Right ventricle myocardium inferior (tissue), 1 donor: ENCODE measurements at regions of chr5 and their contacts with region 1.

Region 1: GRCh38 chr5:179060116-179061008 is at the start of gene ZNF354C:
- DNase-seq: peak; percentile 96
- ATAC-seq: peak; percentile 99
- total RNA-seq, gene ZNF354C: 4.7 TPM

Region 2: GRCh38 chr5:178732281-178732680 is 328.1 kb before region 1 on chr5:
- intact Hi-C with region 1: loop called (anchors 1 kb)
- DNase-seq: no peak
- ATAC-seq: no peak

Region 3: GRCh38 chr5:178859625-178860531 is 200.5 kb before region 1 on chr5 and contains the start of gene ZNF354B:
- intact Hi-C with region 1: loop called (anchors 1 kb)
- DNase-seq: peak; percentile 95
- ATAC-seq: peak; percentile 99
- total RNA-seq, gene ZNF354B: 6.0 TPM

Region 4: GRCh38 chr5:178895651-178896571 is 164.5 kb before region 1 on chr5 and contains the start of gene ZFP2:
- intact Hi-C with region 1: no loop called
- DNase-seq: peak; percentile 77
- ATAC-seq: peak; percentile 97
- total RNA-seq, gene ZFP2: 0.70 TPM

Region 5: GRCh38 chr5:178940569-178941360 is 119.6 kb before region 1 on chr5 and contains the start of gene ZNF454:
- intact Hi-C with region 1: loop called (anchors 10 kb)
- DNase-seq: peak; percentile 94
- ATAC-seq: peak; percentile 99
- total RNA-seq, gene ZNF454: 1.8 TPM

Region 6: GRCh38 chr5:179023528-179024430 is 36.6 kb before region 1 on chr5 and contains the start of gene ZNF879:
- intact Hi-C with region 1: loop called (anchors 2 kb)
- DNase-seq: peak; percentile 96
- ATAC-seq: peak; percentile 99
- total RNA-seq, gene ZNF879: 3.5 TPM

Region 7: GRCh38 chr5:179284751-179285631 is 224.6 kb after region 1 on chr5:
- intact Hi-C with region 1: no loop called
- DNase-seq: peak; percentile 83
- ATAC-seq: peak; percentile 93